ENCODE measurements at regions of chr4 and their contacts with region 1.

Region 1: GRCh38 chr4:158729716-158730559 is 6.7 kb upstream of the PPID start:
- DNase-seq: peak; percentile 63
- CTCF ChIP-seq: peak; percentile 68

Region 2: DNA sequence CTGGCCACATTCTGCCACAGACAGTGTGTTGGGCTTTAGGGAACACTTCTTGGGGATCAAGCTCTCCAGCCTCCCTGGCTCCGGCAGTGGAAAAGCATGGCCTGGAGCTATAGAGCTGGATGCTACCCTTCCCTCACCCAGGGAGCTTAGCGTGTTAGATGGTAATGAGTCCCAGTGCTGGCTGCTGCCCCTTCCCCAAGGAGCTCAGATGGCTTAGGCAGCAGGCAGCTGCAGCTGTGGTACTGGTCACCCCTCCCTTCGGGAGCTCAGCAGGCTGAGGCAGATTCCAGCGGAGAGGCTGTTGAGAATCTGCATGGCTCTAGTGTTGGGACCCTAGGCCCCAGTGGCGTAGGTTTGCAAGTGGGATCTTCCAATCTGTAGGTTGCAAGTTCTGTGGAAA is 500.2 kb before region 1 on chr4:
- in situ Hi-C with region 1: no loop called
- DNase-seq: no peak
- CTCF ChIP-seq: no peak

Region 3: DNA sequence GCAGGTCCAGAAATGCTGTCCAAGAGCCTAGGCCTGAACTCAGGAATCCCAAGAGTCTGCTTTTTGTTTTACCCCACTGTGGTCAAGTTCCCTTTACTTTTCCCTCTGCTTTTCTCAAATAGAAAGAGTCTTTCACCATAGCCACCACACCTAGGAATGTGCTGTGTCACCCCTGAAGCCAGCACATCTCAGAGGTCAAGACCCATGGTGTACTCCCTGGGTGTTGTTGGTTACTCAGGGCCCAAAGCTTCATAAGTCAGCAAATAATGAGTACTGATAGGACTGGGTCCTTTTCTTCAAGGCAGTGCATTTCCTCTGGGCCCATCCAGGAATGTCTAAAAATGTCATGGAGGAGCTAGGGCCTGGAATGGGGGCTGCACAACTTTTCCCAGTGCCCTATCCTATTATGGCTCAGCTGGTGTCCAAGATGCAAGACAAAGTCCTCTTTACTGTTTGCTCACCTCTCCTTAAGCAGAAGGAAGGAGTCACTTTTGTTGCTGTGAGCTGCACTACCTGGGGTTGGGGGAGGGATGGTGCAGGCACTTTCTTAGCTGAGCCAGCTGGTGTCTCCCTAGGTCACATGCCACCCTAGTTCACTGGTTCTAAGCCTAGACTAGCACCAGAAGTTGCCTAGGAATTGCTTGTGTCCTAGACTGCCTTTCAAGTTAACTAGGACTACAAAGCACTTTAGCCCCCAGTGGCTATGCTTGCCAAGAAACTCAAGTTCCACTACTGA is 270.7 kb before region 1 on chr4:
- in situ Hi-C with region 1: no loop called
- DNase-seq: no peak
- CTCF ChIP-seq: no peak

Region 4: GRCh38 chr4:158845311-158846041 is 115.5 kb after region 1 on chr4:
- in situ Hi-C with region 1: loop called (anchors 10 kb)
- DNase-seq: no peak
- CTCF ChIP-seq: no peak

Region 5: GRCh38 chr4:159175085-159175988 is 445.4 kb after region 1 on chr4:
- in situ Hi-C with region 1: loop called (anchors 25 kb)
- DNase-seq: no peak
- CTCF ChIP-seq: peak; percentile 72

Region 6: GRCh38 chr4:159446266-159446976 is 716.5 kb after region 1 on chr4:
- in situ Hi-C with region 1: loop called (anchors 25 kb)
- DNase-seq: peak; percentile 54
- CTCF ChIP-seq: peak; percentile 83

Region 7: DNA sequence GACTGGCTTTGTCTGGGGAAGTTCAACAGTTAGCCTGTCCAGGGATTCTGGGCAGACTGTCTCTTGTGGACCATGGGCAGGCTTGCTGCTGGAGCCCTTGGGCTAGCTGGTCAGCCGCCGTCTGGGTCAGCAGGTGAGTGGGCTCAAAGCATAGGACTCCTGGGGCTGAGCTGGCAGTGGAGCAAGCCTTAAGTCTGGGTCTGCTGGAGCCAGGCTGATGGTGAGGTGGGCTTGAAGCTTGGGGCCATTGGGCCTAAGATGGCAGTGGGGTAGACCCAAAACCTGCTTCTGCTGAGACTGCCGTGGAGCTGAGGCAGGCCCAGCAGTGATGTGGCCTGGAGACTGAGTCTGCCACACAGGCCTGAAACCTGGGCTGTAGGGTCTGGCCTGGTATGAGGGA is 1018.0 kb after region 1 on chr4:
- in situ Hi-C with region 1: no loop called
- DNase-seq: no peak
- CTCF ChIP-seq: no peak

Measured in GM13977 (cell line).